Natural killer cell (primary cell): ENCODE measurements at regions of chr19 and their contacts with region 1.

Region 1: DNA sequence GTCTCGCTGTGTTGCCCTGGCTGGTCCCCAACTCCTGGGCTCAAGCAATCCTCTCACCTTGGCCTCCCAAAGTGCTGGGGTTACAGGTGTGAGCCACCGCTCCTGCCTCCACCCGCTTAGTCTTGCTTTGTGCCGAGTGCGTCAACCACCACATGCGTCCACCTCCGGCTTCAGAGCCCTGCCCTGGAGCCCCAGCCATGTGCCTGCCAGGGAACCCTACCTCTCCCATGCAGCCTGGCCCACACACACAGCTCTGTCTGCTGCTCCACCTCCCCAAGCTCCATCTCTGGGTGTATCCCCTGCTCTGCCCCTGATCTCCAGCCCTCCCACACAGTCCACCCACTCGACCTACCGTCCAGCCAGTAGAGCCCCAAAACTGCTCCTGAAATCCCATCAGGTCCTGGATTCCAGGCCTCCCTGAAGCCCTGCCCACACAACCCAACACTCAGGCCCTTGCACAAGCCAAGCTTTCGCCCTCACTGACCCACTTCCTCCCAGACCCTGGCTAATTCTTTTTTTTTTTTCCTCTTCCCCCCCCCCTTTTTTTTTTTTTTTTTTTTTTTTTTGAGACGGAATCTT is 9.6 kb downstream of the CYP2F1 start:
- DNase-seq: no peak
- ATAC-seq: no peak
- H3K4me3 ChIP-seq: no peak overlapping the region
- H3K4me3 Mint-ChIP-seq: peak overlapping the region; percentile 28
- H3K27ac ChIP-seq: no peak overlapping the region
- H3K27ac Mint-ChIP-seq: peak overlapping the region; percentile 67 to 96
- H3K4me1 ChIP-seq: peaks cover 53% of the 10 kb centered on the region
- H3K4me1 Mint-ChIP-seq: peaks cover 45 to 70% of the 10 kb centered on the region in 2 donors
- H3K27me3 ChIP-seq: no peaks in the 10 kb centered on the region
- H3K27me3 Mint-ChIP-seq: peaks cover 0 to 4% of the 10 kb centered on the region in 2 donors
- CTCF ChIP-seq: no peak

Region 2: DNA sequence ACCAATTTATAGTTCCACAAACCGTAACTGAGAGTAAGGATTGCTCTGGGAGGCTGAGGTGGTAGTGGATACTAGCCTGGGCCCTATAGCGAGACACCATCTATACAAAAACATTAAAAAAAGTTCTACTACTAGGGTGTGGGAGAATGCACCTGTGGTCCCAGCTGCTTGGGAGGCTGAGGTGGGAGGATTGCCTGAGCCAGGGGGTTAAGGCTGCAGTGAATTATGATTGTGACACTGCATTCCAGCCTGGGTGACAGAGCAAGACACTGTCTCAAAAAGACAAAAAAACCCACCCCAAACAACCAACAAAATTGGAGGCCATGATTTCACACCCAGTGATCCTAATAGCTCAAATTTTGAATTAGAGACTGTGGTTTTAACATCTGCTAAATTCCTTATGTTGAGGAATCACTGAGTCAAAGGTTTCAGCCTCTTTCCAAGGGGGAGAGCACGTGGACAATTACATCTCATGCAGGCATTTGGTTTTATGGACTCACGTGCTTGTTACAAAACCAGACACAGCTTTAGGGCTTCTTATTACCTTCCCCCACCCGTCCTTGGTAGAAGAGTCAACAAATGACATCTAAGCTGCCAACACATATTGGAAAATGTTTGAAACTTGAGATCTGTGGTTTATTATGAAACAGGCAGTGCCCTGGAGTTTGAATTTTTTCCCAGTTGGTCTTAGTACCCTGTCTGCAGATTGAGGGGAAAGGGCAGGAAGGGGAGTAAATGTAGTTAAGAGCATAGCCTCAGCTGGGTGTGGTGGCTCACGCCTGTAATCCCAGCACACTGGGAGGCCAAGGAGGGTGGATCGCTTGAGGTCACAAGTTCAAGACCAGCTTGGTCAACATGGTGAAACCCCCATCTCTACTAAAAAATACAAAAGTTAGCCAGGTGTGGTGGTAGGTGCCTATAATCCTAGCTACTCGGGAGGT is 292.0 kb before region 1 on chr19:
- intact Hi-C with region 1: loop called (anchors 2 kb)
- DNase-seq: peak in 1 of 2 donors; percentile 2
- ATAC-seq: no peak
- H3K4me3 ChIP-seq: no peak overlapping the region
- H3K4me3 Mint-ChIP-seq: no peak overlapping the region
- H3K27ac ChIP-seq: no peak overlapping the region
- H3K27ac Mint-ChIP-seq: peak overlapping the region; percentile 27 to 85
- H3K4me1 ChIP-seq: peaks cover 16% of the 10 kb centered on the region
- H3K4me1 Mint-ChIP-seq: peaks cover 19 to 32% of the 10 kb centered on the region in 2 donors
- H3K27me3 ChIP-seq: no peaks in the 10 kb centered on the region
- H3K27me3 Mint-ChIP-seq: no peaks in the 10 kb centered on the region
- CTCF ChIP-seq: no peak

Region 3: DNA sequence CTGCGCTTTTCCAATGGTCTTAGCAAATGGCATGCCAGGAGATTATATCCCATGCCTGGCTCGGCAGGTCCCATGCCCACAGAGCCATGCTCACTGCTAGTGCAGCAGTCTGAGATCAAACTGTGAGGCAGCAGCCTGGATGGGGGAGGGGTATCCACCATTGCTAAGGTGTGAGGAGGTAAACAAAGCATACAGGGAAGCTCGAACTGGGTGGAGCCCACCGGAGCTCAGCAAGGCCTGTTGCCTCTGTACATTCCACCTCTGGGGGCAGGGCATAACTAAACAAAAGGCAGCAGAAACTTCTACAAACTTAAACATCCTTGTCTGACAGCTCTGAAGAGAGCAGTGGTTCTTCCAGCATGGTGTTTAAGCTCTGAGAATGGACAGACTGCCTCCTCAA is 25.0 kb before region 1 on chr19:
- intact Hi-C with region 1: no loop called
- DNase-seq: no peak
- ATAC-seq: no peak
- H3K4me3 ChIP-seq: no peak overlapping the region
- H3K4me3 Mint-ChIP-seq: no peak overlapping the region
- H3K27ac ChIP-seq: no peak overlapping the region
- H3K27ac Mint-ChIP-seq: no peak overlapping the region
- H3K4me1 ChIP-seq: no peaks in the 10 kb centered on the region
- H3K4me1 Mint-ChIP-seq: peaks cover 0 to 10% of the 10 kb centered on the region in 2 donors
- H3K27me3 ChIP-seq: no peaks in the 10 kb centered on the region
- H3K27me3 Mint-ChIP-seq: peaks cover 18 to 48% of the 10 kb centered on the region in 2 donors
- CTCF ChIP-seq: no peak

Region 4: GRCh38 chr19:41144403-41144802 is 20.6 kb after region 1 on chr19:
- intact Hi-C with region 1: loop called (anchors 1 kb)
- DNase-seq: peak; percentile 83 to 95
- ATAC-seq: peak; percentile 93 to 99 (median 97)
- H3K4me3 ChIP-seq: no peak overlapping the region
- H3K4me3 Mint-ChIP-seq: no peak overlapping the region
- H3K27ac ChIP-seq: no peak overlapping the region
- H3K27ac Mint-ChIP-seq: no peak overlapping the region
- H3K4me1 ChIP-seq: no peaks in the 10 kb centered on the region
- H3K4me1 Mint-ChIP-seq: no peaks in the 10 kb centered on the region
- H3K27me3 ChIP-seq: no peaks in the 10 kb centered on the region
- H3K27me3 Mint-ChIP-seq: peaks cover 10 to 21% of the 10 kb centered on the region in 2 donors
- CTCF ChIP-seq: peak; percentile 86

Region 5: DNA sequence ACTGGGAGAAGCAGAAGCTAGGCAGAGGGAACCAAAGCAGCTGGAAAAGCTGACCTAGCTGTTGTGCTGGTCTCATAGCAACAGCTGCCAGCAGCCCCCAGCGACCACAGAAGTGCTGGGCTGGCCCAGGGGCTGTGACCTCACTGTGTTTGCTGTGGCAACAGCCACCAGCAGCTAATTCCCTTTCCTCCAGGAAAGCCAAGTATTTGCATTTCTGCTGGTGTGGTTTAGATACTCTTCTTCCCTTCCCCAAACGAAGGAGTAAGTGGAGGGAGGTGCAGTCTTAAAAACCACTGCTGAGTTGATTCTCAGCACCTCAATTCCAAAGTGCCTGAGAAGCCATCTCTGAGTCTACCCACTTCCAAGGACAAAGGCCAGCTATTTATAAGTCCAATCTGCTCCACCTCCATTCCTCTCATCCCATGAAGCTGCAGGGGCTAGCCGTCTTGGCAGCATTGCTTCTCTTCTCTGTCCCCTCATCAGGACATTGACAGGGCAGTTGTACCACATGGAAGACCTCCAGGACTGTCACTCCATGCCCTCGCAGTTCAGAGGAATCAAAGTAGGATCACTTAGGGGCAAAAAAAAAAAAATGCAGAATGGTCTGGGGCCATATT is 174.7 kb after region 1 on chr19:
- intact Hi-C with region 1: loop called (anchors 2 kb)
- DNase-seq: peak; percentile 62 to 77
- ATAC-seq: peak; percentile 24 to 43 (median 33)
- H3K4me3 ChIP-seq: no peak overlapping the region
- H3K4me3 Mint-ChIP-seq: peak overlapping the region; percentile 65
- H3K27ac ChIP-seq: peak overlapping the region; percentile 87
- H3K27ac Mint-ChIP-seq: peak overlapping the region; percentile 91 to 94
- H3K4me1 ChIP-seq: peaks cover 71% of the 10 kb centered on the region
- H3K4me1 Mint-ChIP-seq: peaks cover 76 to 85% of the 10 kb centered on the region in 2 donors
- H3K27me3 ChIP-seq: no peaks in the 10 kb centered on the region
- H3K27me3 Mint-ChIP-seq: no peaks in the 10 kb centered on the region
- CTCF ChIP-seq: no peak